Panc1 (cell line): ENCODE measurements at regions of chr10 and their contacts with region 1.

Region 1: GRCh38 chr10:95176101-95176500 is 17.9 kb upstream of the ACSM6 start:
- DNase-seq: no peak
- ATAC-seq: peak; percentile 78; the same call in 1 of the 2 replicates
- H3K4me3 ChIP-seq: no peak overlapping the region
- H3K27ac ChIP-seq: no peak overlapping the region
- H3K4me1 ChIP-seq: no peaks in the 10 kb centered on the region
- H3K27me3 ChIP-seq: peaks cover 2% of the 10 kb centered on the region; the same call in 1 of the 2 replicates
- CTCF ChIP-seq: peak; percentile 68

Region 2: DNA sequence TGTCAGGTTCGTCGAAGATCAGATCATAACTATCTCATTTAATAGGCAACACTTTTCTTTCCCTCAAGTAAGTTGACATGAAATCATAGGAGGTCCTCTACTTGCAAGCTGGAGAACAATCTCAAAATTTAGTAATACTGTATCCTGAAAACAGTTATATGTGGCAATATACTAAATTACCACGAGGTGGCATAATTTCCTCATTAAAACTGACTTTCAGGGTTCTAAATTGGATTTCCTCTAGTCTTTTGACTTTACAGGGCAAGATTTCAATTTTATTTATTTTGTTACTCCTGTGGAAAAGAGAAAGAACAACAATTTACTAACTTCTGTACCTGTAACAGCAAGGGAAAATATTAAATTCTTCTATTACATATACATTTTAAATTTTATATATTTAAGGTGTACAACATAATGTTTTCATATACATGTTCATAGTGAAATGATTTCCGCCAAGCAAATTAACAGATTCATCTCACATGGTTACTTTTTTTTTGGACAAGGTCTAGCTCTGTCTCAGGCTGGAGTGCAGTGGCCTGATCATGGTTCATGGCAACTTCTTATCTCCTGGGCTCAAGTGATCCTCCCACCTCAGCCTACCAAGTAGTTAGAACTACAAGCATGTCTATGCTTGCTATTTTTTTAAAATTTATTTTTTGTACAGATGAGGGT is 545.9 kb before region 1 on chr10:
- CTCF ChIA-PET with region 1: no interaction called
- POLR2A ChIA-PET with region 1: no interaction called
- in situ Hi-C with region 1: no loop called
- intact Hi-C with region 1: loop called (anchors 2 kb)
- DNase-seq: peak; percentile 28
- ATAC-seq: peak; percentile 65
- H3K4me3 ChIP-seq: no peak overlapping the region
- H3K27ac ChIP-seq: no peak overlapping the region
- H3K4me1 ChIP-seq: no peaks in the 10 kb centered on the region
- H3K27me3 ChIP-seq: no peaks in the 10 kb centered on the region
- CTCF ChIP-seq: peak; percentile 69

Region 3: GRCh38 chr10:95414844-95415485 is 238.9 kb after region 1 on chr10:
- CTCF ChIA-PET with region 1: no interaction called
- POLR2A ChIA-PET with region 1: no interaction called
- in situ Hi-C with region 1: no loop called
- intact Hi-C with region 1: no loop called
- DNase-seq: no peak
- ATAC-seq: no peak
- H3K4me3 ChIP-seq: no peak overlapping the region
- H3K27ac ChIP-seq: no peak overlapping the region
- H3K4me1 ChIP-seq: no peaks in the 10 kb centered on the region
- H3K27me3 ChIP-seq: no peaks in the 10 kb centered on the region
- CTCF ChIP-seq: no peak